ENCODE measurements at regions of chr20 and their contacts with region 1.

Region 1: GRCh38 chr20:3995067-3995748 is 20.1 kb downstream of the RNF24 start:
- DNase-seq: peak in 2 of 3 donors; percentile 69 to 78
- H3K4me3 ChIP-seq: peak overlapping the region in 1 of 7 experiments; percentile 11
- H3K27ac ChIP-seq: peak overlapping the region in 1 of 2 experiments; percentile 68
- H3K4me1 ChIP-seq: peaks cover 10 to 34% (median 25%) of the 10 kb centered on the region in 4 experiments
- H3K27me3 ChIP-seq: no peaks in the 10 kb centered on the region

Region 2: GRCh38 chr20:4006640-4007039 is 11.4 kb after region 1 on chr20:
- CTCF ChIA-PET with region 1: interaction called, 14 read pairs
- POLR2A ChIA-PET with region 1: no interaction called
- DNase-seq: no peak
- H3K4me3 ChIP-seq: peak overlapping the region in 2 of 7 experiments; percentile 11 to 28
- H3K27ac ChIP-seq: peak overlapping the region in 1 of 2 experiments; percentile 8
- H3K4me1 ChIP-seq: peaks cover 14 to 37% (median 29%) of the 10 kb centered on the region in 4 experiments
- H3K27me3 ChIP-seq: no peaks in the 10 kb centered on the region

Measured in common myeloid progenitor, CD34-positive (primary cell).